CD8-positive, alpha-beta memory T cell (primary cell): ENCODE measurements at regions of chr15 and their contacts with region 1.

Region 1: DNA sequence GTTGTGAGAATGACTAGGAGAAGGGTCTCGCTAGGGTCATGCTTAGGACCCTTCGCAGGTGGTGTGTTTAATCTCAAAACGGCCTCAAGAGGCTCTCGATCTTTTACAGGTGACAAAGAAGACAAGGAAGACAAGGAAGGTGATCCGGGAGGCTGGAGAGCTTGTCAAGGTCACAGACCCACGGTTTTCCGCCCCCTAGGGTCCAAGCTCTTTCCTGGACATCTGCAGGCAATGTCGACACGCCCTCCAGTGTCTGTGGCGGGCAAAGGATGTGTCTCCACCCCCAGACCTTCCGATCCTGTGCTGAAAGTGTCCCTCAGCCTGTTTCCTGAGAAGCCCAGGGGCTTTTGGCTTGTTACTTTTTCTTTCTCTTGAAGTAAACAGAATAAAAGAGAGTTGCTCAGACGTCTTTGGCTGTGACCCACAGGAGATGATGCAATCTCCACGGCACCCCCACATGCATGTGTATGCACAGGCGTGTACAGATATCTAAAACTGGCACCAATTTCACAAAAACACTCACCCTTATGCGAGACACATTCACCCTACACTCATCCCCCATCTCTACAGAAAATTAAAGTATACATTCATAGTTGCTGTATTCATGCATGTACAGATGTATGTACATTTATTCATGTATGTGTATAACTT is 108.8 kb downstream of the KLF13 start:
- DNase-seq: peak; percentile 67 to 93 (median 88)
- H3K4me3 ChIP-seq: peak overlapping the region; percentile 72
- H3K4me3 Mint-ChIP-seq: peak overlapping the region; percentile 69 to 89 (median 86)
- H3K27ac ChIP-seq: peak overlapping the region; percentile 92
- H3K27ac Mint-ChIP-seq: peak overlapping the region; percentile 94 to 100 (median 98)
- H3K4me1 ChIP-seq: peaks cover 73% of the 10 kb centered on the region
- H3K4me1 Mint-ChIP-seq: peaks cover 73 to 84% (median 75%) of the 10 kb centered on the region in 3 donors
- H3K27me3 ChIP-seq: no peaks in the 10 kb centered on the region
- H3K27me3 Mint-ChIP-seq: no peaks in the 10 kb centered on the region

Region 2: GRCh38 chr15:31215490-31216214 is 219.7 kb before region 1 on chr15:
- CTCF ChIA-PET with region 1: interaction called, 19 read pairs
- POLR2A ChIA-PET with region 1: interaction called, 13 read pairs
- DNase-seq: peak; percentile 69 to 83 (median 73)
- H3K4me3 ChIP-seq: peak overlapping the region; percentile 22
- H3K4me3 Mint-ChIP-seq: peak overlapping the region; percentile 56 to 91 (median 71)
- H3K27ac ChIP-seq: peak overlapping the region; percentile 24
- H3K27ac Mint-ChIP-seq: peak overlapping the region in 7 of 8 donors; percentile 21 to 89 (median 72)
- H3K4me1 ChIP-seq: peaks cover 24% of the 10 kb centered on the region
- H3K4me1 Mint-ChIP-seq: peaks cover 19 to 28% (median 20%) of the 10 kb centered on the region in 3 donors
- H3K27me3 ChIP-seq: no peaks in the 10 kb centered on the region
- H3K27me3 Mint-ChIP-seq: no peaks in the 10 kb centered on the region

Region 3: DNA sequence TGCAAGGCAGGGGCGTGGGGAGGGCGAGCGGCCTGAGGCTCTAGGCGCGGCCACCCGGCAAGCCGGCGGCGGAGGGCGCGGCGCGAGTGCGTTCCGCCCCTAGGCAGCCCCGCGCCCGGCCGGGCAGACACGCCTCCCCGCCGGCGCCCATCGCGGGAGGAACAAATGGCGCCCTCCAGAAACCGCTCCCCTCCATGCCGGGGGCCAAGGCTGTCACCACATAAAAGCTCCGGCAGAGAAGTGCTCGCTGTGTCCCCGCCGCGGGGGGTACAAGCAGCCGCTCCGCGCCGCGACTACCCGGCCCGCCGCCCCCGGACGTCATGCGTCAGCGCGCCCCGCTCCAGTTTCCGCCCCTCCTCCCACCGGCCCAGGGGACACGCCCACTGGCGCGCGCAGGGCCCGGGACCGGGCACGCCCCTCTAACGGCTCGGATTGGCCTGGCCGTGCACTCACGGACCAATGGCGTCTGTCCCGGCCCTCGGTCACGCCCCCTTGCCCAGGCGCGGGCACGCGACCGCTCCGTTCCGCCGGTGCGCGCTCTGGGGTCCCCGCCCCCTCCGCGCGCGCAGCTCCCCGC is 109.1 kb before region 1 on chr15:
- CTCF ChIA-PET with region 1: interaction called, 20 read pairs
- POLR2A ChIA-PET with region 1: interaction called, 39 read pairs
- DNase-seq: peak; percentile 99 to 100 (median 100)
- H3K4me3 ChIP-seq: peak overlapping the region; percentile 52
- H3K4me3 Mint-ChIP-seq: peak overlapping the region; percentile 58 to 95 (median 87)
- H3K27ac ChIP-seq: peak overlapping the region; percentile 85
- H3K27ac Mint-ChIP-seq: peak overlapping the region; percentile 46 to 96 (median 76)
- H3K4me1 ChIP-seq: peaks cover 35% of the 10 kb centered on the region
- H3K4me1 Mint-ChIP-seq: peaks cover 37 to 65% (median 42%) of the 10 kb centered on the region in 3 donors
- H3K27me3 ChIP-seq: no peaks in the 10 kb centered on the region
- H3K27me3 Mint-ChIP-seq: peaks cover 0 to 2% of the 10 kb centered on the region in 2 donors

Region 4: GRCh38 chr15:31352911-31353811 is 82.2 kb before region 1 on chr15:
- CTCF ChIA-PET with region 1: interaction called, 12 read pairs
- POLR2A ChIA-PET with region 1: interaction called, 8 read pairs
- DNase-seq: peak; percentile 37 to 71 (median 67)
- H3K4me3 ChIP-seq: peak overlapping the region; percentile 33
- H3K4me3 Mint-ChIP-seq: peak overlapping the region; percentile 73 to 87 (median 82)
- H3K27ac ChIP-seq: peak overlapping the region; percentile 67
- H3K27ac Mint-ChIP-seq: peak overlapping the region; percentile 90 to 98 (median 96)
- H3K4me1 ChIP-seq: peaks cover 100% of the 10 kb centered on the region
- H3K4me1 Mint-ChIP-seq: peaks cover 96 to 99% (median 98%) of the 10 kb centered on the region in 3 donors
- H3K27me3 ChIP-seq: no peaks in the 10 kb centered on the region
- H3K27me3 Mint-ChIP-seq: peaks cover 0 to 1% of the 10 kb centered on the region in 2 donors

Region 5: DNA sequence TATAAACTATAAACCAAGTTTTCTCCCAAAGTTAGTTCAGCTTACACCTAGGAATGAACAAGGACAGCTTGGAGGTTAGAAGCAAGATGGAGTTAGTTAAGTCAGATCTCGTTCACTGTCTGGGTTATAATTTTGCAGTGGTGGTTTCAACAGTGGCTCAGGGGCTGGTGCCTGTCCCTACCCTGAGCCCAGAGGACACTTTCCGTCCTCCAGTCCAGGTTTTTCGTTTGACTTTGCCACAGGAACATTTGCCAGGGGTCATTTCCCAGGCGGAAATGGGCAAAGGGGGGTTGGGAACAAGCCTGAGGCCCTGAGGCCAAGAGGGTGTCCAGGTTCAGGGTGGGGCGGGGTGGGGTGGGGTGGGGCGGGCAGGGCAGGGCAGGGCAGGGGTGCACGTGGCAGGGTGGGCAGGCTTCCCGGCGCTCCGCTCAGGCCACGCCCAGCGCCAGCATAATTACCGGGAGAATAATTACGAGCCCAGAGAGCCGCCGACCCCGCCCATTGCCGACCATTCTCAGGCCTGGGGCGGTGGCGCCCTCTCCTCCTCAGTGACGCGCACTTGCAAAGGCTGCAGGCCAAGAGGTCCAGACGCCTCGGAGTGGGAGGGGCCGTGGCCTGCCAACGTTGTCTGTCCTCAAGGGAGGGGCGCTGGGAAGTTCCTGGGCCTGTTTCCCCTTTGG is 38.4 kb before region 1 on chr15:
- CTCF ChIA-PET with region 1: interaction called, 23 read pairs
- POLR2A ChIA-PET with region 1: interaction called, 53 read pairs
- DNase-seq: no peak
- H3K4me3 ChIP-seq: no peak overlapping the region
- H3K4me3 Mint-ChIP-seq: no peak overlapping the region
- H3K27ac ChIP-seq: no peak overlapping the region
- H3K27ac Mint-ChIP-seq: peak overlapping the region in 3 of 8 donors; percentile 52 to 78 (median 72)
- H3K4me1 ChIP-seq: peaks cover 15% of the 10 kb centered on the region
- H3K4me1 Mint-ChIP-seq: peaks cover 30 to 67% (median 33%) of the 10 kb centered on the region in 3 donors
- H3K27me3 ChIP-seq: no peaks in the 10 kb centered on the region
- H3K27me3 Mint-ChIP-seq: peaks cover 0 to under 1% of the 10 kb centered on the region in 2 donors

Region 6: DNA sequence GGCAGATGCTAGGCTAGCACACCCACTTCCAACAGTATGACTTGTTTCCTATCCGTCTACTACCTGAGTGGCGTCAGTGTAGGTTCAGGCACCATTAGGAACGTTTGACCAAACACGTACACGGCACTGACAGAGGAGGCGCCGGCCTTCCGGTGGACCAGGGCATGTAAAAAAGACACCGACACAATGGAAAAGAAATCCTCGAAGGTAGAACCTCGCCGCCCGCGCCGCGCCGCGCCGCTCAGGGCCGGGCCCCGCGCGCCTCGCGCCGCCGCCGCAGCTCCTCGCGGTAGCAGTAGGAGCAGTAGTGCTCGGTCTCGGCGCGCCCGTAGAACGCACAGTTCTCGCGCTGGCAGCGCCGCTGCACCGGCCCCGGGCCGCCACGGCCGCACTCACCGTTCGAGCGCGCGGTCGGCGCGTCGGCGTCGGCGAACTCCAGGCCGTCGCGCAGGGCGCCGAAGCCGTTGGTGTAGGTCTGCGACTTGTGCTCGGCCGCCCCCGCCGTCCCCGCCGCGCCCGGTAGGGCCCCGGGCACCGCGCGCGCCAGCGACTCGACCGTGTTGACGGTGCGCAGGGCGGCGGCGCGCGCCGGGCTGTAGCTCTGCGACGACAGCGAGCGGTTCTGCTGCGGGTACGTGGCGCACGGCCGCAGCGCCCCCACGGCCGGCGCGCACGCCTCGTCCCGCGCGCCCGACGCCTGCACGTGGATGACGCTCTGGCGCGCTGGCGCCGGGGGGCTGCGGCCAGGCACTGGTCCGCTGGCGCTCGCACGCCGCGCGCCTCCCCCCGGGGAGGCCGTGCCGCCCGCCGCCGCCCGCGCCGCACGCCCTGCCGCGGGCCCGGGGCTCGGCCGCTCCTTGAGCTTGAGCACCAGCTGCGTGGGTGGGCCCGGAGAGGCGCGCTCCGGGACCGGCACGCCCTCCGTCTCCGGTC is 47.9 kb after region 1 on chr15:
- CTCF ChIA-PET with region 1: interaction called, 68 read pairs
- POLR2A ChIA-PET with region 1: interaction called, 30 read pairs
- DNase-seq: peak; percentile 23 to 70 (median 55)
- H3K4me3 ChIP-seq: peak overlapping the region; percentile 49
- H3K4me3 Mint-ChIP-seq: peak overlapping the region; percentile 91 to 98 (median 97)
- H3K27ac ChIP-seq: peak overlapping the region; percentile 24
- H3K27ac Mint-ChIP-seq: peak overlapping the region; percentile 70 to 96 (median 94)
- H3K4me1 ChIP-seq: peaks cover 36% of the 10 kb centered on the region
- H3K4me1 Mint-ChIP-seq: peaks cover 52 to 87% (median 69%) of the 10 kb centered on the region in 3 donors
- H3K27me3 ChIP-seq: no peaks in the 10 kb centered on the region
- H3K27me3 Mint-ChIP-seq: peaks cover 0 to 2% of the 10 kb centered on the region in 2 donors